K562 (cell line): ENCODE measurements at regions of chr15 and their contacts with region 1.

Region 1: DNA sequence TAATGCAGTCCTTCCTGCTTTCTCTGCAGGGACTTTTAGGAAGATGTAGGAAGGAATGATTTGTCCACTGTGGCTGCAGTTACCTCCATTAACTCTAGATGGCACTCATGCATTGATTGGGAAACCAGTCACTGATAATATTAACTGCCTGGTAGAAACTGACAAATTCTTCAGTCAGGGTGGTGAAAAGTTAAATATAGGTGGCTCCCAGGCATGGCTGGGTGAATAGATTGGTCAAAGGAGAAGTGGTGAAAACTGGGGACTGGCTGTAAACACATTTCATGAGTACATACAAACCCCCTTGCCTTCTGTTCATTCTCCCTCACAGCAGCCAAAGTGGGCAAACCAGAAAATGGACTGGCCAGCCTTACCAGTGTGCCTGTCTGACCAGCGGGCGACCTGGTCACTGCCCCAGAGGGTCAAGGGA is 333.4 kb downstream of the THSD4 start:
- DNase-seq: peak; percentile 19 to 42 (median 29)
- ATAC-seq: no peak
- H3K4me3 ChIP-seq: no peak overlapping the region
- H3K27ac ChIP-seq: no peak overlapping the region
- H3K4me1 ChIP-seq: no peaks in the 10 kb centered on the region
- H3K27me3 ChIP-seq: no peaks in the 10 kb centered on the region; a peak in 1 of 5 replicates
- CTCF ChIP-seq: peak; percentile 54 to 75 (median 71); a peak in 5 of 6 replicates
- EP300 ChIP-seq: no peak
- POLR2A ChIP-seq: no peak
- RAD21 ChIP-seq: peak; percentile 61 to 66

Region 2: DNA sequence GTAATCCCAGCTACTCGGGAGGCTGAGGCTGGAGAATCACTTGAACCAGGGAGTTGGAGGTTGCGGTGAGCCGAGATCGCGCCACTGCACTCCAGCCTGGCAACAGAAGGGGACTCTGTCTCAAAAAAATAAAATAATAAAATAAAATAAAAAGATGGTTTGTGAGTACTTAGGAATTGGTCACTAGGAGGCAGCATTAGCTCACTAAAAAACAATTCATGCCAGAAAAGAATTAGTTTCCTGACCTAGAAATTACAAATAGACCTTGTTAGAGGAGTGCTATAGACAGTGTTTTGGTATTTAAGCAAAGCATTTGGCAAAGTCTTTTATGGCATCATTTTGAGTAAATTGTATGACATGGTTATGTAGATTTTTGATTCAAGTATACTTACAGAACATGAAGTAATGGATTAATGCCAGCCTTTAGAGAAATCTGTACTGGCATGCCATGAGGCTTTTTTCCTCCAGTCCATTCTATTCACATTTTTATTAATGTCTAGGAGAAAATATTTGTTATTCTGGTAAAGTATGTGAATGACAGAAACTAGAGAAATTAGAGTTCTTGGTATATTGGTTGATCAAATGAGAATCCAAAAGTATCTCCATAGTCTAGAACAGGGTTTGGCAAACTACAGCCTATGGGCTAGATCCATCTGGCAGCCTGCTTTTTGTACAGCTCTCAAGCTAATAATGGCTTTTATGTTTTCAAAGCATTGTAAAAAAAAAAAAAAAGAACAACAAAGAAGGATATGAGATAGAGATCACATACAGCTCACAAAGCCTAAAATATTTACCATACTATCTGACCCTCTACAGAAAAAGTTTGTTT is 474.5 kb before region 1 on chr15:
- CTCF ChIA-PET with region 1: no interaction called
- POLR2A ChIA-PET with region 1: no interaction called
- in situ Hi-C with region 1: no loop called
- intact Hi-C with region 1: loop called (anchors 10 kb)
- DNase-seq: peak in 1 of 4 experiments; percentile 14
- ATAC-seq: no peak
- H3K4me3 ChIP-seq: no peak overlapping the region
- H3K27ac ChIP-seq: no peak overlapping the region
- H3K4me1 ChIP-seq: no peaks in the 10 kb centered on the region
- H3K27me3 ChIP-seq: no peaks in the 10 kb centered on the region
- CTCF ChIP-seq: peak in 1 of 3 experiments; percentile 36; a peak in 2 of 6 replicates
- EP300 ChIP-seq: no peak
- POLR2A ChIP-seq: no peak
- RAD21 ChIP-seq: peak; percentile 26 to 50; a peak in 3 of 4 replicates

Region 3: GRCh38 chr15:71011503-71012155 is 437.1 kb before region 1 on chr15:
- CTCF ChIA-PET with region 1: no interaction called
- POLR2A ChIA-PET with region 1: no interaction called
- in situ Hi-C with region 1: no loop called
- intact Hi-C with region 1: loop called (anchors 10 kb)
- DNase-seq: peak in 3 of 4 experiments; percentile 1 to 9 (median 8)
- ATAC-seq: no peak
- H3K4me3 ChIP-seq: no peak overlapping the region
- H3K27ac ChIP-seq: no peak overlapping the region
- H3K4me1 ChIP-seq: no peaks in the 10 kb centered on the region
- H3K27me3 ChIP-seq: no peaks in the 10 kb centered on the region
- CTCF ChIP-seq: peak in 2 of 3 experiments; percentile 27 to 37; a peak in 1 of 6 replicates
- EP300 ChIP-seq: no peak
- POLR2A ChIP-seq: no peak
- RAD21 ChIP-seq: peak; percentile 46 to 52

Region 4: GRCh38 chr15:71114896-71115554 is 333.7 kb before region 1 on chr15 and contains the start of gene THSD4:
- CTCF ChIA-PET with region 1: interaction called, 3 read pairs
- POLR2A ChIA-PET with region 1: no interaction called
- in situ Hi-C with region 1: loop called (anchors 10 kb)
- intact Hi-C with region 1: loop called (anchors 5 kb)
- DNase-seq: peak; percentile 72 to 93 (median 90)
- ATAC-seq: peak; percentile 99
- H3K4me3 ChIP-seq: peak within 1 kb of the TSS; percentile 27
- H3K27ac ChIP-seq: no peak within 1 kb of the TSS
- H3K4me1 ChIP-seq: peaks cover 0 to 15% of the 10 kb centered on the region in 2 experiments; a peak in 2 of 5 replicates
- H3K27me3 ChIP-seq: peaks cover 9 to 13% of the 10 kb centered on the region in 2 experiments; a peak in 3 of 5 replicates
- CTCF ChIP-seq: peak; percentile 78 to 83 (median 83)
- EP300 ChIP-seq: no peak
- POLR2A ChIP-seq: no peak
- RAD21 ChIP-seq: peak; percentile 56 to 73
- polyA plus RNA-seq, gene THSD4: not detected

Region 5: GRCh38 chr15:71294886-71295638 is 153.6 kb before region 1 on chr15:
- CTCF ChIA-PET with region 1: no interaction called
- POLR2A ChIA-PET with region 1: no interaction called
- in situ Hi-C with region 1: no loop called
- intact Hi-C with region 1: no loop called
- DNase-seq: no peak
- ATAC-seq: no peak
- H3K4me3 ChIP-seq: no peak overlapping the region
- H3K27ac ChIP-seq: no peak overlapping the region
- H3K4me1 ChIP-seq: no peaks in the 10 kb centered on the region
- H3K27me3 ChIP-seq: no peaks in the 10 kb centered on the region; a peak in 1 of 5 replicates
- CTCF ChIP-seq: no peak
- EP300 ChIP-seq: no peak
- POLR2A ChIP-seq: no peak
- RAD21 ChIP-seq: no peak

Region 6: GRCh38 chr15:71465131-71465530 is 16.4 kb after region 1 on chr15:
- CTCF ChIA-PET with region 1: no interaction called
- POLR2A ChIA-PET with region 1: no interaction called
- in situ Hi-C with region 1: no loop called
- intact Hi-C with region 1: no loop called
- DNase-seq: no peak
- ATAC-seq: no peak
- H3K4me3 ChIP-seq: no peak overlapping the region
- H3K27ac ChIP-seq: no peak overlapping the region
- H3K4me1 ChIP-seq: no peaks in the 10 kb centered on the region
- H3K27me3 ChIP-seq: no peaks in the 10 kb centered on the region
- CTCF ChIP-seq: no peak
- EP300 ChIP-seq: no peak
- POLR2A ChIP-seq: no peak
- RAD21 ChIP-seq: no peak

Region 7: DNA sequence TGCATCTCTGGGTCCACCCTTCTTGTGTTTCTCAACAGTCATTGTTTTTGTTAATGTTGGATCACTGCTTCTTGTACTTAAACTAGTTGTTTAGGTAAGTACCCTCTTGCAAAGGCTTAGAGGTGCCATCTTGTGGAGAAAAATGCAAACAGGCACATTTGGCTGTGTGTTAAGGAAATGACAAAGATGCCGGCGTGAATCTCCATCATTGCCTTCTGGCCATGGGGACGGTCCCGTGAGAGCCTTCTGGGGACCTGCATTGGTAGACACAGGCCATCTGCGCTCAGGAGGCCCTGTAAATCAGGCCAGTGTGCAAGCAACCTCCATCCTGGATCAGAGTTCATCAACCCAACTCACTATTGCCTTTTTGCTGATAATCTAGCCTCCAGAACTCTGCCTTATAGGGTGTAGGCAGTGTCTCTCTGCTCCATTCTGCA is 203.1 kb after region 1 on chr15:
- CTCF ChIA-PET with region 1: no interaction called
- POLR2A ChIA-PET with region 1: no interaction called
- in situ Hi-C with region 1: no loop called
- intact Hi-C with region 1: loop called (anchors 5 kb)
- DNase-seq: peak in 1 of 4 experiments; percentile 30
- ATAC-seq: peak; percentile 64
- H3K4me3 ChIP-seq: no peak overlapping the region
- H3K27ac ChIP-seq: no peak overlapping the region
- H3K4me1 ChIP-seq: no peaks in the 10 kb centered on the region; a peak in 1 of 5 replicates
- H3K27me3 ChIP-seq: peaks cover 0 to 4% of the 10 kb centered on the region in 2 experiments; a peak in 1 of 5 replicates
- CTCF ChIP-seq: peak; percentile 41 to 57 (median 47); a peak in 4 of 6 replicates
- EP300 ChIP-seq: no peak
- POLR2A ChIP-seq: no peak
- RAD21 ChIP-seq: peak; percentile 55 to 57

Region 8: GRCh38 chr15:71730277-71731144 is 281.8 kb after region 1 on chr15:
- CTCF ChIA-PET with region 1: no interaction called
- POLR2A ChIA-PET with region 1: no interaction called
- in situ Hi-C with region 1: no loop called
- intact Hi-C with region 1: loop called (anchors 1 kb)
- DNase-seq: peak; percentile 55 to 63 (median 60)
- ATAC-seq: peak; percentile 96
- H3K4me3 ChIP-seq: no peak overlapping the region
- H3K27ac ChIP-seq: no peak overlapping the region
- H3K4me1 ChIP-seq: no peaks in the 10 kb centered on the region
- H3K27me3 ChIP-seq: no peaks in the 10 kb centered on the region
- CTCF ChIP-seq: peak; percentile 62 to 78 (median 78)
- EP300 ChIP-seq: no peak
- POLR2A ChIP-seq: no peak
- RAD21 ChIP-seq: peak; percentile 59 to 63

Region 9: DNA sequence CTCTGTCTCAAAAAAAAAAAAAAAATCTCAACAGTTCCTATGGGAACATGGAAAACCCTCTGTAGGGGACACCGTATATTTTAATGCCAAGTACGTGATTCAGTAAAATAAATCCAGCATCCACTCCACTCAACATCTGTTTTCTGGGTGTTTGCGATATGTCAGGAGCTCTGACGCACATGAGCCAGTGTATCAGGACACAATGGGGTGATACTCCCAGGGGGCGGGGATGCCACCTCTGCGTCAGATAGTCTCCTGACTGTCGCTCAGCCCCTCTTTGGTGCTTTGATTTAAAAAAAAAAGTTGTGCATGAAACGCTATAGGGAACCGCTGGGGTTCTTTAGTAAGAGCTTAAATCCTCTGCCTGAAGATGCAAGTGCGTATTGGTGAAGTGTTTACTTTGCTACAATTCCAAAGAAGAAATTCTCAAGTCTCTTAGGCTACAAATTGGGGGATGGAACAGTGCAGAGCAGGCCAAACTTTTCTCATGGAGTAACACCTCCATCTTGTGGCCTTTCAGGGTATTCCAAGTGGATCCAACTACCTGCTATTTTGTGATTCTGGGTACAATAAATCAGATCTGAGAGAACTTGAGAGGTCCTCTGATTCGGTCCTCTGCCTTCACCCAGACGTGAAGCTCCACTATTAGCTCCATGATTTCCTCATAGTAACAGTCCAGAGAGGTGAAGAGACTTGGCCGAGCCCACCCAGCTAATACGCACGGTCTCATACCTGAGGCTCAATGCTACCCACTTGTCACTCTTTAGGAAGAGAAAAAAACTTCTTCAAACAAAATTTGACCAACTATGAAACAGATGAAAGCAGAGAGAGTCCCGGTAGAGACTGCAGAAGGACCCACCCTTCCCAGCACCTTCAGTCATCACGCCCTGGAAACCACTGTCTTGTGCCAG is 352.4 kb after region 1 on chr15:
- CTCF ChIA-PET with region 1: no interaction called
- POLR2A ChIA-PET with region 1: no interaction called
- in situ Hi-C with region 1: no loop called
- intact Hi-C with region 1: loop called (anchors 10 kb)
- DNase-seq: peak; percentile 46 to 57 (median 54)
- ATAC-seq: peak; percentile 87
- H3K4me3 ChIP-seq: no peak overlapping the region
- H3K27ac ChIP-seq: no peak overlapping the region
- H3K4me1 ChIP-seq: peaks cover 0 to 8% of the 10 kb centered on the region in 2 experiments; a peak in 2 of 5 replicates
- H3K27me3 ChIP-seq: peaks cover 3 to 25% of the 10 kb centered on the region in 2 experiments; a peak in 2 of 5 replicates
- CTCF ChIP-seq: peak; percentile 61 to 88 (median 74)
- EP300 ChIP-seq: no peak
- POLR2A ChIP-seq: no peak
- RAD21 ChIP-seq: peak; percentile 75 to 83

Region 10: GRCh38 chr15:71853543-71853942 is 404.8 kb after region 1 on chr15:
- CTCF ChIA-PET with region 1: no interaction called
- POLR2A ChIA-PET with region 1: no interaction called
- in situ Hi-C with region 1: no loop called
- intact Hi-C with region 1: no loop called
- DNase-seq: no peak
- ATAC-seq: no peak
- H3K4me3 ChIP-seq: no peak overlapping the region
- H3K27ac ChIP-seq: no peak overlapping the region
- H3K4me1 ChIP-seq: no peaks in the 10 kb centered on the region
- H3K27me3 ChIP-seq: no peaks in the 10 kb centered on the region
- CTCF ChIP-seq: no peak
- EP300 ChIP-seq: no peak
- POLR2A ChIP-seq: no peak
- RAD21 ChIP-seq: no peak